H1 (cell line): ENCODE measurements at regions of chr21 and their contacts with region 1.

Region 1: DNA sequence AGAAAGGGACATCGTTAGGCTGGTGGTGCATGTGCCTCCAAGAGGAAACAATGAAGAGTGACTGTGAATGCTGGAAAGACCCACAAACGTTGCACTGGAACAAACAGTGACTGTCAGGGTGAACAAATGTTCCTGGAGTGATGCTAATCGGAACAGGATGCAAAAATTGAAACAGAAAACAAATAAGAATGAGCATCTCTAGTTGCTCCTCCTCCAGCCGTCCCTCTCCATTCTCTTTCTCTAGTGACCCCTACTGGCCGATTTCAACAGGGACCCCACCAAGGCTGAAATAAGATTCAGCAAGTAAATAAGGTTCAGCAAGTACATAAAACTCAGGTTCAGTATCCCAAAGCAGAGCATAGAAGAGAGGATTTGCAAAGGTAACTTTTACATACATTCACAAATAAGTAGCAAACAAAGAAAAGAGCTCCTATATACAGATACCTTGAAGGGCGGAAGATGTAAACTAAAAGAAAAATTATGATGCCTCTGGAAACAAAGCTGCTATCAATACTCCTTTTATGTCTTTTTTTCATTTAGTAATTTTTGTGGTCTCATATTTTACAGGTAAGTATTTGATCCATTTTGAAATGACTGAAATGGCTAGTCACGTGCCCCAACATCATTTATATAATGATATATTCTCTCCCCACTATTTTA is 836.1 kb upstream of the ADAMTS5 start:
- DNase-seq: peak; percentile 17 to 66
- H3K4me3 ChIP-seq: no peak overlapping the region
- H3K27ac ChIP-seq: no peak overlapping the region
- H3K4me1 ChIP-seq: no peaks in the 10 kb centered on the region
- H3K27me3 ChIP-seq: no peaks in the 10 kb centered on the region
- CTCF ChIP-seq: peak; percentile 29 to 75 (median 50)
- EP300 ChIP-seq: no peak
- POLR2A ChIP-seq: no peak
- RAD21 ChIP-seq: peak; percentile 68

Region 2: GRCh38 chr21:27759091-27759659 is 43.8 kb before region 1 on chr21:
- CTCF ChIA-PET with region 1: interaction called, 10 read pairs
- POLR2A ChIA-PET with region 1: no interaction called
- DNase-seq: peak; percentile 19 to 55
- H3K4me3 ChIP-seq: no peak overlapping the region
- H3K27ac ChIP-seq: no peak overlapping the region
- H3K4me1 ChIP-seq: peaks cover 0 to 4% (median 0%) of the 10 kb centered on the region in 4 experiments; a peak in 1 of 7 replicates
- H3K27me3 ChIP-seq: peaks cover 0 to 1% (median 0%) of the 10 kb centered on the region in 4 experiments; a peak in 1 of 7 replicates
- CTCF ChIP-seq: peak; percentile 66 to 74 (median 66)
- EP300 ChIP-seq: no peak
- POLR2A ChIP-seq: no peak
- RAD21 ChIP-seq: peak; percentile 81 to 82

Region 3: DNA sequence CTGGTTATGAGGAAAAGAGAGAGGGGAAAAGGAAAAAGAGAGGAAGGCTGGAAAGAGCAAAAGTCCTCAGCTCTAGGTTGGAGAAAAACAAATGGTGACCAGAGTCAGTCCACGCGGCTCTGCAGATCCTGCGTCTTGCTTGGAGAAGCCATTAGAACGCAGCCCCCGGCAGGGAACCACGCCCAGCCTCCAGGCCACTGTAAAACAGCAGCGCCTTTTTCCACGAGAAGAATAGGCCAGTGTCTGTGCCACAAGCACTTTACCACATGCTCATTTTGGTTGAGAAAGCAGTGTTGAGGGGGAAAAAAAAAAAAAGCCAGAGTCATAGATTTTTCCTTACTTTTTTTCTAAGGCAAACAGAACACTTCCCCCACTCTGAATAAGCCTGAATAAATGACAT is 10.8 kb after region 1 on chr21:
- CTCF ChIA-PET with region 1: interaction called, 13 read pairs
- POLR2A ChIA-PET with region 1: no interaction called
- DNase-seq: no peak
- H3K4me3 ChIP-seq: no peak overlapping the region
- H3K27ac ChIP-seq: no peak overlapping the region
- H3K4me1 ChIP-seq: no peaks in the 10 kb centered on the region
- H3K27me3 ChIP-seq: no peaks in the 10 kb centered on the region
- CTCF ChIP-seq: no peak
- EP300 ChIP-seq: no peak
- POLR2A ChIP-seq: no peak
- RAD21 ChIP-seq: no peak